ENCODE measurements at regions of chr10 and their contacts with region 1.

Region 1: DNA sequence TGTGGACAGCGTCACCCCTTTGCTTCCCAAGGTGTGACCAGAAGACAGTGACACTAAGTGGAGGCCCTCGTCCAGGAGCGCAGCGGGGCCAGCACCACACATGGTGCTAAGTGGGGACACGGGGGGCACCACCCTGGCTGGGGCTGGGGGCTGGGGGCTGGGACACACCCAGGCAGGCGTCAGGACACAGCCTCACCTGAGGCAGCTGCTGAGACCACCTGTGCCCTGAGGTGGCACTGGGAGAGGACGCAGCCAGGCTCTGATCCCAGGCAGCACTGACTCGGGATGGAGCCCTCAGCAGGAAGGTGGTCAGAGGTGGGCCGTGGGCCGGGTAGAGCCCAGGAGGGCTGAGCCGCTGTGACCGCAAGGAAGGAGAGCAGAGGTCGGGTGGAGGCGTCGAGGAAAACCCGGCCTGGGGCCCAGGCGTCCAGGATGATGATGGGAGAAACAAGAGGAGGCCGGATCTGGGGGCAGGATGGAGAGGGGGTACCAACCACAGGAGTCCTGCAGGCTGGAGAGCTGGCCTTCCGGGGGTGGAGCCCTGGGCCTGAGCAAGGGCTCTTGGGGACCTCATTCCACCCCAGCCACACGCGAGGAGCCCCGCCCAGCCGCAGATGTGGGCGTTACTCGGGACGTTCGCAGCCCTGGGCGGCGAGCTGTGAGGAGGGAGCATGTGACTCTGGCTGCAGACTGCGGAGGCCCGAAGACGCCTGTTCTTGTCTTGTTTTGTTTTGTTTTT is 22.5 kb downstream of the LRRC27 start:
- DNase-seq: no peak
- ATAC-seq: no peak

Region 2: GRCh38 chr10:132107186-132107948 is 247.2 kb before region 1 on chr10:
- intact Hi-C with region 1: no loop called
- DNase-seq: no peak
- ATAC-seq: no peak

Region 3: GRCh38 chr10:132223156-132223590 is 131.4 kb before region 1 on chr10:
- intact Hi-C with region 1: loop called in 1 of 2 experiments (anchors 5 kb)
- DNase-seq: peak; percentile 69 to 83
- ATAC-seq: peak; percentile 99